ENCODE measurements at regions of chr11 and their contacts with region 1.

Region 1: DNA sequence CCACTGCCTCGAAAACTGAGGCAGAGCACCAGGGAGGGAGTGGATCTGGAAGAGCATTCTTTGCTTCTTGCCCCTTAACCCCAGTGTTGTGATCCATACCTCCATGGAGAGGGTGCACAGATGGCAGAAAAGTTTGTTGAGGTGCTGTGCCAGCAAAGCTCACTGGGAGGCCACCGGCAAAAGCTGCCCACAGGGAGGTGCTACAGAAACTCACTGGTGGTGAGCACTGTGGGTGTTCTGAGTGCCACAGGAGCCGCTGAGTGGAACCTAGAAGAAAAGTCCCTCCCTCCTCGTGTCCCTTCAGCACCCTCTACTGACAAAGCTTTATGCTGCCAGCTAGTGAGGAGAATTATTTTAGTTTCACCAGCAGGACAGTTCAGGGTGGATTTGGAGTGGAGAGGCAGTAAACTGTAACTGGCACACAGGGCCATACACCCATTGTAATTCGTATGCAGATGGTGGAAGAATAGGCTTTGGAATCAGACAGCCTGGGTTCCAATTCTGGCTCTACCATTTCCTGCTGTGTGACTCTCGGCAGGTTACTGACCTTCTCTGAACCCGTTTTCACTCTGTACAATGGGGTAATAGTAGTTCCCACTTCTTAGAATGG is 84.6 kb downstream of the SWAP70 start:
- DNase-seq: peak; percentile 70
- H3K4me3 ChIP-seq: no peak overlapping the region
- H3K27ac ChIP-seq: 0 out of 4 replicates have a peak overlapping the region, but pooled peaks of 1 of the 2 experiments have one; percentile 6
- H3K4me1 ChIP-seq: peaks cover 5 to 11% of the 10 kb centered on the region in 2 experiments; a peak in 3 of 4 replicates
- H3K27me3 ChIP-seq: no peaks in the 10 kb centered on the region
- CTCF ChIP-seq: peak; percentile 73
- EP300 ChIP-seq: no peak
- RAD21 ChIP-seq: peak; percentile 87

Region 2: GRCh38 chr11:9573052-9573774 is 175.3 kb before region 1 on chr11 and contains the start of gene WEE1:
- CTCF ChIA-PET with region 1: interaction called, 11 read pairs
- POLR2A ChIA-PET with region 1: interaction called, 3 read pairs
- DNase-seq: peak; percentile 97
- H3K4me3 ChIP-seq: peak within 1 kb of the TSS; percentile 70 to 89
- H3K27ac ChIP-seq: peak within 1 kb of the TSS; percentile 95 to 99
- H3K4me1 ChIP-seq: peaks cover 14 to 20% of the 10 kb centered on the region in 2 experiments
- H3K27me3 ChIP-seq: no peaks in the 10 kb centered on the region
- CTCF ChIP-seq: no peak
- EP300 ChIP-seq: peak; percentile 26 to 30; a peak in 1 of 4 replicates
- RAD21 ChIP-seq: no peak
- polyA plus RNA-seq, gene WEE1: 16.9 and 20.6 TPM in 2 replicates

Region 3: GRCh38 chr11:9613118-9613829 is 135.2 kb before region 1 on chr11:
- CTCF ChIA-PET with region 1: interaction called, 23 read pairs
- POLR2A ChIA-PET with region 1: no interaction called
- DNase-seq: peak; percentile 87
- H3K4me3 ChIP-seq: peak overlapping the region; percentile 29 to 43; a peak in 2 of 4 replicates
- H3K27ac ChIP-seq: peak overlapping the region; percentile 8 to 93; a peak in 2 of 4 replicates
- H3K4me1 ChIP-seq: peaks cover 0 to 15% of the 10 kb centered on the region in 2 experiments; a peak in 2 of 4 replicates
- H3K27me3 ChIP-seq: no peaks in the 10 kb centered on the region
- CTCF ChIP-seq: peak; percentile 97
- EP300 ChIP-seq: peak in 1 of 2 experiments; percentile 67; a peak in 1 of 4 replicates
- RAD21 ChIP-seq: peak; percentile 71